Left colon (tissue), 2 donors: ENCODE measurements at regions of chr15 and their contacts with region 1.

Region 1: GRCh38 chr15:35444557-35445204 is 101.3 kb downstream of the DPH6 start:
- DNase-seq: no peak
- ATAC-seq: peak; percentile 64

Region 2: GRCh38 chr15:35078221-35078915 is 366.3 kb before region 1 on chr15:
- intact Hi-C with region 1: loop called in 1 of 2 experiments (anchors 10 kb)
- DNase-seq: no peak
- ATAC-seq: peak; percentile 61

Region 3: GRCh38 chr15:35293353-35294130 is 151.1 kb before region 1 on chr15:
- intact Hi-C with region 1: loop called in 1 of 2 experiments (anchors 5 kb)
- DNase-seq: no peak
- ATAC-seq: peak; percentile 66